ENCODE measurements at regions of chr4 and their contacts with region 1.

Region 1: DNA sequence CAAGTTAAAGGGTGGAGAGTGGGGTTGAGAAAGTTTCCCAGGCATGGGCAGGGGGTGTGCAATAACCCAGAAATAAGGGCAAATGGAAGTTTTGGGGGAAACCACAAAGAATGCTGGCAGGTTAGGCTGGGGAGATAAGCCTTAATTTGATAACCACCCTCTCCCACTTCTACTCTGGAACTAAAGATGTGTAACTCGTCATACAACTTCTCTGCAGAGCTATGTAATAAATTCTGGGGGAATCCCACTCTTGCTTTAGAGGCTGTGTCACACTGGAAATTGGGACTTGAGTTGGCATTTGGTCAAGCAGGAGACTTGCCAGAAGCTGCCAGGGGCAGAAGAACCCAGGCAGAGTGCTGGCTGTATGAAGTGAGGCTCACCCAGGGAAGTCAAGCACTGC is 170.9 kb upstream of the CPEB2 start:
- DNase-seq: no peak
- H3K4me3 ChIP-seq: no peak overlapping the region
- H3K27ac ChIP-seq: no peak overlapping the region
- H3K4me1 ChIP-seq: peaks cover 0 to 22% (median 12%) of the 10 kb centered on the region in 4 donors
- H3K27me3 ChIP-seq: no peaks in the 10 kb centered on the region
- CTCF ChIP-seq: no peak

Region 2: GRCh38 chr4:14701896-14702295 is 129.5 kb before region 1 on chr4:
- intact Hi-C with region 1: no loop called
- DNase-seq: no peak
- H3K4me3 ChIP-seq: no peak overlapping the region
- H3K27ac ChIP-seq: no peak overlapping the region
- H3K4me1 ChIP-seq: peaks cover 0 to 18% (median 9%) of the 10 kb centered on the region in 4 donors
- H3K27me3 ChIP-seq: no peaks in the 10 kb centered on the region
- CTCF ChIP-seq: no peak

Region 3: DNA sequence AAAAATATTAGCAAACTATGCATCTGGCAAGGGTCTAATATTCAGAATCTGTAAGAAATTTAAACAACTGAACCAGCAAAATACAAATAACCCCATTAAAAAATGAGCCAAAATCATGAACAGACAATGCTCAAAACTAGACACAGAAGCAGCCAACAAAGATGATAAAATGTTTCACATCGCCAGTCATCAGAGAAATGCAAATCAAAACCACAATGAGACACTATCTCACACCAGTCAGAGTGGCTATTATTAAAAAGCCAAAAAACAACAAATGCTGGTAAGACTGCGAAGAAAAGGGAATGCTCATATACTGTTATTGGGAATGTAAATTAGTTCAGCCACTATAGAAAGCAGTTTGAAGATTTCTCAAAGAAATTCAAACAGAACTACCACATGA is 30.4 kb before region 1 on chr4:
- intact Hi-C with region 1: no loop called
- DNase-seq: no peak
- H3K4me3 ChIP-seq: no peak overlapping the region
- H3K27ac ChIP-seq: no peak overlapping the region
- H3K4me1 ChIP-seq: no peaks in the 10 kb centered on the region
- H3K27me3 ChIP-seq: no peaks in the 10 kb centered on the region
- CTCF ChIP-seq: no peak

Region 4: GRCh38 chr4:14924812-14925344 is 93.5 kb after region 1 on chr4:
- intact Hi-C with region 1: loop called (anchors 5 kb)
- DNase-seq: no peak
- H3K4me3 ChIP-seq: no peak overlapping the region
- H3K27ac ChIP-seq: no peak overlapping the region
- H3K4me1 ChIP-seq: no peaks in the 10 kb centered on the region
- H3K27me3 ChIP-seq: no peaks in the 10 kb centered on the region
- CTCF ChIP-seq: no peak

Region 5: GRCh38 chr4:15385928-15386327 is 554.5 kb after region 1 on chr4:
- intact Hi-C with region 1: no loop called
- DNase-seq: peak; percentile 68 to 89
- H3K4me3 ChIP-seq: peak overlapping the region; percentile 9 to 30
- H3K27ac ChIP-seq: peak overlapping the region; percentile 64 to 70
- H3K4me1 ChIP-seq: peaks cover 0 to 55% (median 20%) of the 10 kb centered on the region in 4 donors
- H3K27me3 ChIP-seq: no peaks in the 10 kb centered on the region
- CTCF ChIP-seq: no peak